WTC11 (cell line): ENCODE measurements at regions of chr4 and their contacts with region 1.

Region 1: DNA sequence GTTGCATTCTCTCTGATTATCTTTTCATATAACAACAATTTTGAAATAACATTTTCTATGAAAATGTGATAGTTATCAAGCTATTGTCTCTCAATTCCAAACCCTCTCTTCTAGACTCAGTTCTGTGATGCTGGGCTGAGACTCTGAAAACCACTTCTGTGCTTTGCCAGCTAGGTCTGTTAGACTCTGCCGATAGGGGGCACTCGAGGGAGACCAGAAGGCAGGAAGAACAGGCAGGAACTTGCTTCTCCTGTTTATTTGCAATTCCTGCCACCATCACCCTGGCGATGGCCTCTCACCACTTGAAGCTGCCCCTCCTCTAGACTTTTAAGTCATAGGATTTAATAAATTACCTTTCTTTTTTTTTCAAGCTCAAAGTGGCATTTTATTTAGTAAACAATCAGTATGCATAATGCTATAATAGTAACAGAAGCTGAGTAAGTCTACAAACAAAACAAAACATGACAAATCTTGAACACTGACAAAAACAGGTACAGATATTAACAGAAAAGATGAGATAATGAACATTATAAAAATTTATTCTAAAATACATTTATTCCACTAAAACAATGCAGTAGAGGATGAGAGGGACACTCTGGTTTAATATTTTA is 49.7 kb downstream of the RASL11B start:
- DNase-seq: peak; percentile 95
- ATAC-seq: peak; percentile 86
- H3K4me3 Mint-ChIP-seq: no peak overlapping the region
- H3K27ac Mint-ChIP-seq: no peak overlapping the region
- H3K4me1 Mint-ChIP-seq: peaks cover 40% of the 10 kb centered on the region
- H3K27me3 Mint-ChIP-seq: no peaks in the 10 kb centered on the region
- CTCF ChIP-seq: peak; percentile 70

Region 2: DNA sequence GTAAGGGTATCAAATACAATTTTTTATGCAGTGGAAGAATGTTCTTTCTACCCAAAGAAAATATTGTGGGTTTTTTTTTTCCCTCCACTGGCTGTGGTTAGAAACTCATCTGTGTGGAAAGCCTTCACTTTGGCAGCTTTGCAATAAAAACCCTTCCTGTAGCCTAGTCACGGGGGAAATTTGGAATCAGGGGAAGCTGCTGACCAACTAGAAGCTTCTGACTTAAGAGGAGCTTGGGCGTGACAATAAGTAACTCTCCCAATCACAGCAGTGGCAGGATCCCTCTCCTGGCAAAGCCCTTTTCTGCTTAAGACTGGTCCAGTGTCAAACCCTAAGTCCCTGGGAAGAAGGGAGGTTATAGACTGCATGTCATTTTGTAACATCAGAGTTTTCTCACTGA is 979.5 kb before region 1 on chr4:
- CTCF ChIA-PET with region 1: no interaction called
- POLR2A ChIA-PET with region 1: no interaction called
- DNase-seq: no peak
- ATAC-seq: no peak
- H3K4me3 Mint-ChIP-seq: no peak overlapping the region
- H3K27ac Mint-ChIP-seq: no peak overlapping the region
- H3K4me1 Mint-ChIP-seq: no peaks in the 10 kb centered on the region
- H3K27me3 Mint-ChIP-seq: peaks cover 5% of the 10 kb centered on the region
- CTCF ChIP-seq: no peak

Region 3: GRCh38 chr4:52824603-52825459 is 87.0 kb before region 1 on chr4:
- CTCF ChIA-PET with region 1: no interaction called
- POLR2A ChIA-PET with region 1: no interaction called
- DNase-seq: no peak
- ATAC-seq: peak; percentile 57; the same call in 1 of the 2 replicates
- H3K4me3 Mint-ChIP-seq: no peak overlapping the region
- H3K27ac Mint-ChIP-seq: no peak overlapping the region
- H3K4me1 Mint-ChIP-seq: peaks cover 9% of the 10 kb centered on the region
- H3K27me3 Mint-ChIP-seq: no peaks in the 10 kb centered on the region; the same call in 1 of the 2 replicates
- CTCF ChIP-seq: no peak

Region 4: GRCh38 chr4:52861879-52862616 is 49.7 kb before region 1 on chr4 and contains the start of gene RASL11B:
- CTCF ChIA-PET with region 1: interaction called, 14 read pairs
- POLR2A ChIA-PET with region 1: no interaction called
- DNase-seq: peak; percentile 86
- ATAC-seq: peak; percentile 93
- H3K4me3 Mint-ChIP-seq: peak within 1 kb of the TSS; percentile 90
- H3K27ac Mint-ChIP-seq: peak within 1 kb of the TSS; percentile 83
- H3K4me1 Mint-ChIP-seq: peaks cover 65% of the 10 kb centered on the region
- H3K27me3 Mint-ChIP-seq: no peaks in the 10 kb centered on the region
- CTCF ChIP-seq: no peak
- total RNA-seq, gene RASL11B: 58.5 to 71.9 TPM (median 69.9 TPM) in 3 replicates

Region 5: GRCh38 chr4:52868138-52868537 is 43.7 kb before region 1 on chr4:
- CTCF ChIA-PET with region 1: interaction called, 14 read pairs
- POLR2A ChIA-PET with region 1: no interaction called
- DNase-seq: peak; percentile 56
- ATAC-seq: peak; percentile 77
- H3K4me3 Mint-ChIP-seq: no peak overlapping the region
- H3K27ac Mint-ChIP-seq: peak overlapping the region; percentile 79
- H3K4me1 Mint-ChIP-seq: peaks cover 83% of the 10 kb centered on the region
- H3K27me3 Mint-ChIP-seq: no peaks in the 10 kb centered on the region
- CTCF ChIP-seq: no peak

Region 6: DNA sequence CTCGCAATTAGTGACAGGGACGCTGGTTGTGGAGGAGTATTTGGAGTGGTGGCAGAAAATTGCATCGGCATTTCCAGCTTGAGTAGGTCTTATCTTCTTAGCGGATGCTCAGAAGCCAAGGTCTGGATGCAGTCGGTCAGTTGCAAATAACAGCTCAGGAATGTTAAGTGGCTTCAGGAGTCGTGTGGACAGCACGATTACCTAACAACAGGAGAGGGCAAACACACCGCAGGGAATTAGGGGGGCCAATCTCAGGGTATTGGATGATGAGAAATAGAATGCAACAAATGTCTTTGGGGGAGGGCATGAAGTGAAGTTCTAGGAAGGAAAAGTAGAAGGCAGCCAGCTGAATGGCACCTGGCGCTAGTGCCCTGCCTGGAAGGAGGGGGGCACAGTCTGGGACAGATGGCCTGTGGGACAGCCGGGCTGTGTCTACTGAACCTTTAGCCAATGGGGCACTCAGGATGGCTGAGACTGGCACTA is 37.9 kb before region 1 on chr4:
- CTCF ChIA-PET with region 1: interaction called, 10 read pairs
- POLR2A ChIA-PET with region 1: interaction called, 9 read pairs
- DNase-seq: peak; percentile 72
- ATAC-seq: peak; percentile 79
- H3K4me3 Mint-ChIP-seq: peak overlapping the region; percentile 31
- H3K27ac Mint-ChIP-seq: peak overlapping the region; percentile 78
- H3K4me1 Mint-ChIP-seq: peaks cover 78% of the 10 kb centered on the region
- H3K27me3 Mint-ChIP-seq: peaks cover 8% of the 10 kb centered on the region
- CTCF ChIP-seq: no peak

Region 7: GRCh38 chr4:52925531-52925968 is 13.8 kb after region 1 on chr4:
- CTCF ChIA-PET with region 1: interaction called, 12 read pairs
- POLR2A ChIA-PET with region 1: interaction called, 6 read pairs
- DNase-seq: no peak
- ATAC-seq: peak; percentile 84
- H3K4me3 Mint-ChIP-seq: no peak overlapping the region
- H3K27ac Mint-ChIP-seq: peak overlapping the region; percentile 51; the same call in 1 of the 2 replicates
- H3K4me1 Mint-ChIP-seq: peaks cover 22% of the 10 kb centered on the region
- H3K27me3 Mint-ChIP-seq: no peaks in the 10 kb centered on the region
- CTCF ChIP-seq: no peak

Region 8: GRCh38 chr4:53150631-53151488 is 239.1 kb after region 1 on chr4:
- CTCF ChIA-PET with region 1: no interaction called
- POLR2A ChIA-PET with region 1: no interaction called
- DNase-seq: no peak
- ATAC-seq: no peak
- H3K4me3 Mint-ChIP-seq: no peak overlapping the region
- H3K27ac Mint-ChIP-seq: no peak overlapping the region
- H3K4me1 Mint-ChIP-seq: peaks cover 9% of the 10 kb centered on the region
- H3K27me3 Mint-ChIP-seq: no peaks in the 10 kb centered on the region
- CTCF ChIP-seq: no peak